Naive thymus-derived CD4-positive, alpha-beta T cell (primary cell): ENCODE measurements at regions of chr1 and their contacts with region 1.

Region 1: GRCh38 chr1:183498342-183498991 is 26.2 kb downstream of the SMG7 start:
- DNase-seq: peak in 6 of 9 donors; percentile 22 to 57 (median 40)
- ATAC-seq: peak; percentile 58
- H3K4me3 ChIP-seq: no peak overlapping the region
- H3K4me3 Mint-ChIP-seq: peak overlapping the region; percentile 34 to 76 (median 64)
- H3K27ac ChIP-seq: no peak overlapping the region
- H3K27ac Mint-ChIP-seq: peak overlapping the region; percentile 48 to 89 (median 71)
- H3K4me1 ChIP-seq: peaks cover 23 to 38% of the 10 kb centered on the region in 2 donors
- H3K4me1 Mint-ChIP-seq: peaks cover 40 to 96% (median 79%) of the 10 kb centered on the region in 7 donors
- H3K27me3 ChIP-seq: no peaks in the 10 kb centered on the region
- H3K27me3 Mint-ChIP-seq: no peaks in the 10 kb centered on the region

Region 2: GRCh38 chr1:183218971-183219615 is 279.4 kb before region 1 on chr1:
- CTCF ChIA-PET with region 1: no interaction called
- POLR2A ChIA-PET with region 1: no interaction called
- intact Hi-C with region 1: no loop called
- DNase-seq: peak in 8 of 9 donors; percentile 10 to 89 (median 84)
- ATAC-seq: peak; percentile 84
- H3K4me3 ChIP-seq: no peak overlapping the region
- H3K4me3 Mint-ChIP-seq: peak overlapping the region in 9 of 10 donors; percentile 28 to 64 (median 53)
- H3K27ac ChIP-seq: no peak overlapping the region
- H3K27ac Mint-ChIP-seq: peak overlapping the region in 8 of 9 donors; percentile 15 to 86 (median 41)
- H3K4me1 ChIP-seq: peaks cover 0 to 21% of the 10 kb centered on the region in 2 donors
- H3K4me1 Mint-ChIP-seq: peaks cover 13 to 44% (median 36%) of the 10 kb centered on the region in 7 donors
- H3K27me3 ChIP-seq: no peaks in the 10 kb centered on the region
- H3K27me3 Mint-ChIP-seq: peaks cover 0 to 5% (median 0%) of the 10 kb centered on the region in 5 donors

Region 3: GRCh38 chr1:183480971-183481441 is 17.5 kb before region 1 on chr1:
- CTCF ChIA-PET with region 1: no interaction called
- POLR2A ChIA-PET with region 1: interaction called, 4 read pairs
- intact Hi-C with region 1: loop called in 1 of 2 experiments (anchors 2 kb)
- DNase-seq: no peak
- ATAC-seq: peak; percentile 40
- H3K4me3 ChIP-seq: no peak overlapping the region
- H3K4me3 Mint-ChIP-seq: peak overlapping the region in 7 of 10 donors; percentile 7 to 77 (median 36)
- H3K27ac ChIP-seq: no peak overlapping the region
- H3K27ac Mint-ChIP-seq: peak overlapping the region in 4 of 9 donors; percentile 0 to 72 (median 38)
- H3K4me1 ChIP-seq: peaks cover 47 to 62% of the 10 kb centered on the region in 2 donors
- H3K4me1 Mint-ChIP-seq: peaks cover 49 to 84% (median 75%) of the 10 kb centered on the region in 7 donors
- H3K27me3 ChIP-seq: no peaks in the 10 kb centered on the region
- H3K27me3 Mint-ChIP-seq: no peaks in the 10 kb centered on the region

Region 4: GRCh38 chr1:183487674-183488442 is 10.6 kb before region 1 on chr1:
- CTCF ChIA-PET with region 1: no interaction called
- POLR2A ChIA-PET with region 1: interaction called, 3 read pairs
- intact Hi-C with region 1: loop called in 1 of 2 experiments (anchors 1 kb)
- DNase-seq: no peak
- ATAC-seq: no peak
- H3K4me3 ChIP-seq: no peak overlapping the region
- H3K4me3 Mint-ChIP-seq: peak overlapping the region in 1 of 10 donors; percentile 1
- H3K27ac ChIP-seq: no peak overlapping the region
- H3K27ac Mint-ChIP-seq: peak overlapping the region in 3 of 9 donors; percentile 3 to 23 (median 13)
- H3K4me1 ChIP-seq: peaks cover 5 to 7% of the 10 kb centered on the region in 2 donors
- H3K4me1 Mint-ChIP-seq: peaks cover 29 to 87% (median 77%) of the 10 kb centered on the region in 7 donors
- H3K27me3 ChIP-seq: no peaks in the 10 kb centered on the region
- H3K27me3 Mint-ChIP-seq: no peaks in the 10 kb centered on the region

Region 5: GRCh38 chr1:183515018-183515689 is 16.7 kb after region 1 on chr1:
- CTCF ChIA-PET with region 1: no interaction called
- POLR2A ChIA-PET with region 1: interaction called, 4 read pairs
- intact Hi-C with region 1: loop called (anchors 2 kb)
- DNase-seq: no peak
- ATAC-seq: no peak
- H3K4me3 ChIP-seq: no peak overlapping the region
- H3K4me3 Mint-ChIP-seq: no peak overlapping the region
- H3K27ac ChIP-seq: no peak overlapping the region
- H3K27ac Mint-ChIP-seq: peak overlapping the region in 4 of 9 donors; percentile 7 to 59 (median 30)
- H3K4me1 ChIP-seq: no peaks in the 10 kb centered on the region
- H3K4me1 Mint-ChIP-seq: peaks cover 12 to 31% (median 14%) of the 10 kb centered on the region in 7 donors
- H3K27me3 ChIP-seq: no peaks in the 10 kb centered on the region
- H3K27me3 Mint-ChIP-seq: no peaks in the 10 kb centered on the region